ENCODE measurements at regions of chr17 and their contacts with region 1.

Region 1: DNA sequence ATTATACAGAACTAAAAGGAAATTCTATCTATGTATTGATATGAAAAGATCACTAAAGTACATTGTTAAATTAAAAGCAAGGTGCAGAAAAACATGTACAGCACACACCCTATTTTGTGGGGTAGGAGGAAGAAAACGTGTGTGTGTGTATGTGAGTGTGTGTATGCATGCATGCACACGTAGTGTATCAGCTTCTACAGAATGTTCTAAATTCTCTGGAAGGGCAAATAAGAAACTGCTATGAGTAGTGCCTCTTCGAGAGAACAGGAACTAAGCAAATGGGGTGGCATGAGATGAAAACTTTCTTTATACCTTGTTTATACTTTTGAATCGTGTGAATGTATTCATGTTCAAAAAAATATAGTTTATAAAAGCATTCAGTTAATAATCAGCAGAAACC is 58.9 kb downstream of the TMC6 start:
- DNase-seq: no peak
- H3K4me3 ChIP-seq: no peak overlapping the region
- H3K27ac ChIP-seq: no peak overlapping the region
- H3K4me1 ChIP-seq: no peaks in the 10 kb centered on the region
- H3K27me3 ChIP-seq: no peaks in the 10 kb centered on the region
- CTCF ChIP-seq: no peak
- EP300 ChIP-seq: no peak
- POLR2A ChIP-seq: no peak
- RAD21 ChIP-seq: no peak

Region 2: GRCh38 chr17:77968788-77969187 is 100.9 kb before region 1 on chr17:
- CTCF ChIA-PET with region 1: no interaction called
- POLR2A ChIA-PET with region 1: no interaction called
- DNase-seq: no peak
- H3K4me3 ChIP-seq: no peak overlapping the region
- H3K27ac ChIP-seq: no peak overlapping the region
- H3K4me1 ChIP-seq: peaks cover 0 to 2% (median 0%) of the 10 kb centered on the region in 4 experiments; a peak in 1 of 7 replicates
- H3K27me3 ChIP-seq: no peaks in the 10 kb centered on the region
- CTCF ChIP-seq: no peak
- EP300 ChIP-seq: no peak
- POLR2A ChIP-seq: no peak
- RAD21 ChIP-seq: no peak

Region 3: GRCh38 chr17:78032166-78032565 is 37.5 kb before region 1 on chr17:
- CTCF ChIA-PET with region 1: no interaction called
- POLR2A ChIA-PET with region 1: no interaction called
- DNase-seq: no peak
- H3K4me3 ChIP-seq: no peak overlapping the region
- H3K27ac ChIP-seq: no peak overlapping the region
- H3K4me1 ChIP-seq: no peaks in the 10 kb centered on the region
- H3K27me3 ChIP-seq: peaks cover 0 to 1% (median 0%) of the 10 kb centered on the region in 4 experiments; a peak in 1 of 7 replicates
- CTCF ChIP-seq: no peak
- EP300 ChIP-seq: no peak
- POLR2A ChIP-seq: no peak
- RAD21 ChIP-seq: no peak

Region 4: GRCh38 chr17:78086740-78087139 is 17.0 kb after region 1 on chr17:
- CTCF ChIA-PET with region 1: interaction called, 12 read pairs
- POLR2A ChIA-PET with region 1: no interaction called
- DNase-seq: no peak
- H3K4me3 ChIP-seq: no peak overlapping the region
- H3K27ac ChIP-seq: no peak overlapping the region
- H3K4me1 ChIP-seq: no peaks in the 10 kb centered on the region
- H3K27me3 ChIP-seq: no peaks in the 10 kb centered on the region
- CTCF ChIP-seq: no peak
- EP300 ChIP-seq: no peak
- POLR2A ChIP-seq: no peak
- RAD21 ChIP-seq: no peak